Left cardiac atrium (tissue), 4 donors: ENCODE measurements at regions of chr19 and their contacts with region 1.

Region 1: DNA sequence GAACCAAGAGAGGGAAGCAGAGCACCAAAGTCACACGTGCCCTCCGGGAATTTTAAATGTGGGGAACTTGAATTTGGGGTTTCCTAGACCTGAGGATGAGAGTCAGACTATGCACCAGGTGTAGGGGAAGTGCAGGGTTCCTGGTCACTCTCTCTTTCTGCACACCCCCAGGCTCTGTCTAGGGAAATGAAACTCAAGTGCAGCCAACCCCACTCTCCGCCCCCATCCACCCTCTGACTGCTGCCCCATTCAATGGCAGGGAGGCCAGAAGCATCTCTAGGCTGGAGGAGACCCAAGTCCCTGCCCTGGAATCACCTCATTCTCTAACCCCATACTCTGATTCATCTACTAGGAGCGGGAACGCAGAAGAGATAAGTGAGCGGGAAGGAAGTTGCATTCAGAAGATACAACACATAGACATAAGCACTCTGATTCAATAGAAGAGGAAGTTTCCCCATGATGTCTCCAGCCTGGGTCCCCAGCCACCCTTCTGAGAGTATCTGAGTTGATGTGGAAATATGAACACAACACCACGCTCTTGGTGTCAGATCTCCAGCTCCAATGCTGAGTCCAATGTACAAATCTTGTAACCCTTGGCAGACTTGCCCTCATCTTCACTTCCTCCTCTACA is 4.7 kb upstream of the SIGLEC14 start:
- DNase-seq: no peak
- ATAC-seq: peak in 1 of 2 donors; percentile 54

Region 2: DNA sequence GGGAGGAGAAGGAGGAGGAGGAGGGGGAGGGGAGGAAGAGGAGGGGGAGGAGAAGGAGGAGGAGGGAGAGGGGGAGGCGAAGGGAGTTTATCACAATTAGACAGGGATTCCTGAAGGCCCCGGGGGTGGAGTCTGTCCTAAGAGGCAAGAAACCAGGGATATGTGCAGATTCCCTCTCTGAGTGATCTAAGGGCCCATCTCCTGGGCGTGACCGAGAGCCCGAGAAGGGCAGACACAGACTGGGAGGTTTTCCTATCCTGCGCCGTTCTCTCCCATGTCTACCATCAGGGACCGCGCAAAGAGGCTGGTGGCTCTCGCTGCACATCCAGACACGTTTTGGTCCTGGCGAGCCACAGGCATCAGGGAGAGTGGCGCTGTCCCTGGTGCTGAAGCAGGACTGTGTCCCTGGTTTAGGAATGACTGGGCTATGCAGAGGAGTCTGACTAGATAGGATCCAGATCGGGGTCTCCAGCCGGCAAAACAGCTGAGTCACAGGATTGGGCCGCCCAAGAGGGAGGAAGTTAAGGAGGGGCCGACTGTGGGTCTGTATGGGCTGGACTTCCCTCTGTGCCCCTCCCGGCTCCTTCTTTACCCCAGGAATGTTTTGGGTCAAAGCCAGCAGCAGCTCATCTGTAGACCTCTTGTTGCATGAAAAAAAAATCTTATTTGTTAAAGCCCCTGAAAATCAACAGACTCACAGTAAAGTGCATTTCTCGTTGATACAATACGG is 98.2 kb before region 1 on chr19:
- intact Hi-C with region 1: no loop called
- DNase-seq: peak; percentile 83
- ATAC-seq: peak; percentile 55 to 67

Region 3: DNA sequence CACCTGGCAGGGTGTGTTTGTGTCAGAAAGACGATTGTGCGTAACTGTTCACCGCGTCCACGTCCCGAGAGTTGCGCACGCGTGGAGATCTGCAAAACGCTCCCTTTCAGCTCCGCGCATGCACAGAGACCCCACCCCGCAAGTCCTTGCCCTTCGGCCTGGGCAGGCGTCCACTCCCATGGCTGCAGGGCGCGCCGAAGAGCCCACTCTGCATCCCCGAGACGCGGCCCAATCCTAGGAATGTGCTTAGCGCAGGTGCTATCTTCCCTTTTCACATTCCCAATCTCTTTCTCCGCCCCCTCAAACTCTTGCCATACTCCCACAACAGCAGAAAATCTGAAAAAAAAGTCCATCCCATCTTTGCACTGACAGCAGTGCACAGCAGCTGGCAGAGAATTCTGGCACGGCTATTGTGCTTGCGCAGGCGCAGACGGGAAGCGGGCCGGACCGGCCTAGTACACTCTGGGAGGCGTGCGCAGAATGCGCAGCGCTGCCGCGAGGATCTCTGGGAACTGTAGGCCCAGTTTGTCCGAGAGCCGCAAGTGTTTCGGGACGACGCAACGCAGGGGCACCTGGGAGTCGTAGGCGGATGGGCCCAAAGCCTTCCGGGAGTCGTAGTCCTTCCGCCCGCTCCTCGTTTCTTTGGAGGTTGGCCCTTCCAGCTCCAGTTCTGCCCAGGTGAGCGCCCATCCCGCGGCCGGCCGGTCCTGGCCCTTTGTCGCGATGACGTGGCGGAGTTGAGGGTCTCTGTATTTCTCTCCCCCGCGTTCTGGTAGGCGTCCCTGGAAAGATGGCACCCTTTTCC is 57.2 kb before region 1 on chr19:
- intact Hi-C with region 1: loop called in 1 of 2 experiments (anchors 10 kb)
- DNase-seq: peak; percentile 99
- ATAC-seq: peak; percentile 99